ENCODE measurements at regions of chr13 and their contacts with region 1.

Region 1: DNA sequence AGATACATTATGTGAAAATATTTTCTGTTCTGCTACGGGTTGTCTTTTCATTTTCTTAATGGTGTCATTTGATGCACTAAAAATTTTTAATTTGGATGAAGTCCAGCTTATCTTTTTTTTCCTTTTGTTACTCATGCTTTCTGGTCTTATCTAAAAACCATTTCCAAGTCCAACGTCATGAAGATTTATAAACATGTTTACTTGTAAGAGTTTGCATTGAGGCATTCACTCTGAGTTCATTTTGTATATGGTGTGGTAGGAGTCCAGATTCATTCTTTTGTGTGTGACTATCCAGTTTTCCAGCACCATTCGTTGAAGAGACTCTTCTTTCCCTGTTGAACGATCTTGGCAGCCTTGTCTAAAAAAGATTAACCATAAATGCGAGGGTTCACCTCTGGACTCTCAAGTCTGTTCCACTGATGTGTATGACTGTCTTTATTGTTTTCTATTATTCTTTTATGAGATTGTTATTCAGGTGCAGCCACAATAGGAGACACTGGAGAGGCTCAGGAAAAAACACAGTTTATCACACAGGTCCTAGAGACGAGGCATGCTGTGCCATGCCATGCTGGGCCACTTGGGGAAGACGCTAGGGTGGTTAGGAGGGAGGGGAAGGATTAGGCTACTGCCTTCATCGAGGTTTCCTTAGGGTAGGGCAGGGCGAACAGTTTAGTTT is 35.0 kb downstream of the NAA16 start:
- DNase-seq: no peak
- ATAC-seq: no peak
- H3K4me3 ChIP-seq: no peak overlapping the region
- H3K4me3 Mint-ChIP-seq: peak overlapping the region in 4 of 10 donors; percentile 19 to 53 (median 42)
- H3K27ac ChIP-seq: peak overlapping the region; percentile 17
- H3K27ac Mint-ChIP-seq: peak overlapping the region in 8 of 9 donors; percentile 74 to 92 (median 85)
- H3K4me1 ChIP-seq: peaks cover 19 to 20% of the 10 kb centered on the region in 2 donors
- H3K4me1 Mint-ChIP-seq: peaks cover 19 to 73% (median 61%) of the 10 kb centered on the region in 7 donors
- H3K27me3 ChIP-seq: no peaks in the 10 kb centered on the region
- H3K27me3 Mint-ChIP-seq: no peaks in the 10 kb centered on the region

Region 2: DNA sequence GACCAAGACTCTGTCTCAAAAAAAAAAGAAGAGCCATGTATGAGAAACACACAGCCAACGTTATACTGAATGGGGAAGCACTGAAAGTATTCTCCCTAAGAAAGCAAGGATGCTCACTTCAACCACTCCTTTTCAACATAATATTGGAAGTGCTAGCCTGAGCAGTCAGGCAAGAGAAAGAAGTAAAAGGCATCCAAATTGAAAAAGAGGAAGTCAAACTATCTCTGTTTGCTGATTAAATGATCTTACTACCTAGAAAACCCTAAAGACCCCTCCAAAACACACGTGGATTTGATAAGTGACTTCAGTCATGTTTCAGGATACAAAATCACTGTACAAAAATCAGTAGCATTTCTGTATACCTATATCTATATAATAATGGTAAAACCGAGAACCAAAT is 268.6 kb before region 1 on chr13:
- CTCF ChIA-PET with region 1: no interaction called
- POLR2A ChIA-PET with region 1: no interaction called
- intact Hi-C with region 1: no loop called
- DNase-seq: no peak
- ATAC-seq: no peak
- H3K4me3 ChIP-seq: no peak overlapping the region
- H3K4me3 Mint-ChIP-seq: no peak overlapping the region
- H3K27ac ChIP-seq: no peak overlapping the region
- H3K27ac Mint-ChIP-seq: no peak overlapping the region
- H3K4me1 ChIP-seq: no peaks in the 10 kb centered on the region
- H3K4me1 Mint-ChIP-seq: no peaks in the 10 kb centered on the region
- H3K27me3 ChIP-seq: no peaks in the 10 kb centered on the region
- H3K27me3 Mint-ChIP-seq: no peaks in the 10 kb centered on the region

Region 3: GRCh38 chr13:41327994-41328790 is 17.9 kb before region 1 on chr13:
- CTCF ChIA-PET with region 1: interaction called, 4 read pairs
- POLR2A ChIA-PET with region 1: no interaction called
- intact Hi-C with region 1: loop called in 1 of 2 experiments (anchors 2 kb)
- DNase-seq: no peak
- ATAC-seq: no peak
- H3K4me3 ChIP-seq: no peak overlapping the region
- H3K4me3 Mint-ChIP-seq: peak overlapping the region in 6 of 10 donors; percentile 1 to 54 (median 24)
- H3K27ac ChIP-seq: no peak overlapping the region
- H3K27ac Mint-ChIP-seq: peak overlapping the region in 5 of 9 donors; percentile 34 to 78 (median 55)
- H3K4me1 ChIP-seq: peaks cover 11 to 17% of the 10 kb centered on the region in 2 donors
- H3K4me1 Mint-ChIP-seq: peaks cover 15 to 83% (median 59%) of the 10 kb centered on the region in 7 donors
- H3K27me3 ChIP-seq: no peaks in the 10 kb centered on the region
- H3K27me3 Mint-ChIP-seq: no peaks in the 10 kb centered on the region

Region 4: GRCh38 chr13:42275098-42275471 is 929.0 kb after region 1 on chr13:
- CTCF ChIA-PET with region 1: no interaction called
- POLR2A ChIA-PET with region 1: no interaction called
- intact Hi-C with region 1: no loop called
- DNase-seq: no peak
- ATAC-seq: no peak
- H3K4me3 ChIP-seq: no peak overlapping the region
- H3K4me3 Mint-ChIP-seq: peak overlapping the region in 7 of 10 donors; percentile 0 to 57 (median 36)
- H3K27ac ChIP-seq: no peak overlapping the region
- H3K27ac Mint-ChIP-seq: peak overlapping the region in 7 of 9 donors; percentile 22 to 94 (median 56)
- H3K4me1 ChIP-seq: peaks cover 31 to 41% of the 10 kb centered on the region in 2 donors
- H3K4me1 Mint-ChIP-seq: peaks cover 15 to 62% (median 55%) of the 10 kb centered on the region in 7 donors
- H3K27me3 ChIP-seq: no peaks in the 10 kb centered on the region
- H3K27me3 Mint-ChIP-seq: no peaks in the 10 kb centered on the region

Measured in naive thymus-derived CD4-positive, alpha-beta T cell (primary cell).